ENCODE measurements at regions of chr3 and their contacts with region 1.

Region 1: GRCh38 chr3:4271834-4272233 is 31.3 kb upstream of the SETMAR start:
- DNase-seq: peak in 4 of 9 donors; percentile 11 to 27 (median 14)
- ATAC-seq: peak; percentile 29
- H3K4me3 ChIP-seq: no peak overlapping the region
- H3K4me3 Mint-ChIP-seq: peak overlapping the region in 1 of 10 donors; percentile 22
- H3K27ac ChIP-seq: no peak overlapping the region
- H3K27ac Mint-ChIP-seq: no peak overlapping the region
- H3K4me1 ChIP-seq: peaks cover 8 to 11% of the 10 kb centered on the region in 2 donors
- H3K4me1 Mint-ChIP-seq: peaks cover 3 to 22% (median 15%) of the 10 kb centered on the region in 7 donors
- H3K27me3 ChIP-seq: no peaks in the 10 kb centered on the region
- H3K27me3 Mint-ChIP-seq: peaks cover 0 to 8% (median 0%) of the 10 kb centered on the region in 5 donors

Region 2: DNA sequence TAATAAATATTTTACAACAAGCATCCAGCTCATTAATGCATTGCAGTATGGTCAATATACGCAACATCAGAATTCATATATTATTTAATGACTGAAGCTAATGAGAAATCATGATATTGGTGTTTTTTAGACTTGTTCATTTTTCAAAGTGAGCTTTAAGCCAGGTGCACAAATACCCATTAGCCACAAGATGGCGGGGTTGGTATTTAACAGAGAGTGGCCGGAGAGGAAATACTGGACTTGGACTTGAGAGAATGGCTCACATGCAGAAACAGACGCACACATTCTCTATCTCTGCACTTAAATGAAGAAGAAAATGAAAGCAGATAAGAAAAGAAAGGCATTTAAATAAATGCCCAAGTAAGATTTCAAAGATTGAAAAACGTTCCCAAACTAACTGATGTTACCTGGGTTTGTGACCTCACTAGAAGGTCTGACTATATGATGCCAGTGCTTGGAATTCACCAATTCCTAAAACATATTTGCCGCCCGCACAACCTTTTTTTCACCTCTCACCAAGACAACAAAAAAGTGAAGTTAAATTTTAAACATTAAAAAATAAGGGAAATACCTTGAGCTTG is 1071.1 kb before region 1 on chr3:
- CTCF ChIA-PET with region 1: interaction called, 14 read pairs
- POLR2A ChIA-PET with region 1: no interaction called
- intact Hi-C with region 1: loop called (anchors 1 to 5 kb)
- DNase-seq: peak in 5 of 9 donors; percentile 7 to 39 (median 28)
- ATAC-seq: peak; percentile 71
- H3K4me3 ChIP-seq: no peak overlapping the region
- H3K4me3 Mint-ChIP-seq: peak overlapping the region in 6 of 10 donors; percentile 36 to 76 (median 51)
- H3K27ac ChIP-seq: no peak overlapping the region
- H3K27ac Mint-ChIP-seq: peak overlapping the region in 1 of 9 donors; percentile 58
- H3K4me1 ChIP-seq: no peaks in the 10 kb centered on the region
- H3K4me1 Mint-ChIP-seq: peaks cover 8 to 27% (median 19%) of the 10 kb centered on the region in 7 donors
- H3K27me3 ChIP-seq: no peaks in the 10 kb centered on the region
- H3K27me3 Mint-ChIP-seq: peaks cover 0 to 8% (median 0%) of the 10 kb centered on the region in 5 donors

Region 3: GRCh38 chr3:3998140-3998922 is 273.5 kb before region 1 on chr3:
- CTCF ChIA-PET with region 1: no interaction called
- POLR2A ChIA-PET with region 1: no interaction called
- intact Hi-C with region 1: loop called in 1 of 2 experiments (anchors 10 kb)
- DNase-seq: peak in 5 of 9 donors; percentile 11 to 39 (median 24)
- ATAC-seq: peak; percentile 46
- H3K4me3 ChIP-seq: no peak overlapping the region
- H3K4me3 Mint-ChIP-seq: no peak overlapping the region
- H3K27ac ChIP-seq: no peak overlapping the region
- H3K27ac Mint-ChIP-seq: no peak overlapping the region
- H3K4me1 ChIP-seq: no peaks in the 10 kb centered on the region
- H3K4me1 Mint-ChIP-seq: no peaks in the 10 kb centered on the region
- H3K27me3 ChIP-seq: no peaks in the 10 kb centered on the region
- H3K27me3 Mint-ChIP-seq: peaks cover 0 to 3% (median 0%) of the 10 kb centered on the region in 5 donors